ENCODE measurements at regions of chr12 and their contacts with region 1.

Region 1: GRCh38 chr12:4276524-4277204 is 3.1 kb downstream of the CCND2 start:
- DNase-seq: peak; percentile 67 to 94 (median 88)
- ATAC-seq: peak; percentile 30
- H3K4me3 ChIP-seq: no peak overlapping the region
- H3K4me3 Mint-ChIP-seq: peak overlapping the region; percentile 97
- H3K27ac ChIP-seq: peak overlapping the region in 1 of 2 experiments; percentile 94
- H3K27ac Mint-ChIP-seq: peak overlapping the region; percentile 98
- H3K4me1 ChIP-seq: peaks cover 67% of the 10 kb centered on the region
- H3K4me1 Mint-ChIP-seq: peaks cover 65% of the 10 kb centered on the region
- H3K27me3 ChIP-seq: no peaks in the 10 kb centered on the region
- H3K27me3 Mint-ChIP-seq: no peaks in the 10 kb centered on the region
- CTCF ChIP-seq: peak; percentile 83

Region 2: DNA sequence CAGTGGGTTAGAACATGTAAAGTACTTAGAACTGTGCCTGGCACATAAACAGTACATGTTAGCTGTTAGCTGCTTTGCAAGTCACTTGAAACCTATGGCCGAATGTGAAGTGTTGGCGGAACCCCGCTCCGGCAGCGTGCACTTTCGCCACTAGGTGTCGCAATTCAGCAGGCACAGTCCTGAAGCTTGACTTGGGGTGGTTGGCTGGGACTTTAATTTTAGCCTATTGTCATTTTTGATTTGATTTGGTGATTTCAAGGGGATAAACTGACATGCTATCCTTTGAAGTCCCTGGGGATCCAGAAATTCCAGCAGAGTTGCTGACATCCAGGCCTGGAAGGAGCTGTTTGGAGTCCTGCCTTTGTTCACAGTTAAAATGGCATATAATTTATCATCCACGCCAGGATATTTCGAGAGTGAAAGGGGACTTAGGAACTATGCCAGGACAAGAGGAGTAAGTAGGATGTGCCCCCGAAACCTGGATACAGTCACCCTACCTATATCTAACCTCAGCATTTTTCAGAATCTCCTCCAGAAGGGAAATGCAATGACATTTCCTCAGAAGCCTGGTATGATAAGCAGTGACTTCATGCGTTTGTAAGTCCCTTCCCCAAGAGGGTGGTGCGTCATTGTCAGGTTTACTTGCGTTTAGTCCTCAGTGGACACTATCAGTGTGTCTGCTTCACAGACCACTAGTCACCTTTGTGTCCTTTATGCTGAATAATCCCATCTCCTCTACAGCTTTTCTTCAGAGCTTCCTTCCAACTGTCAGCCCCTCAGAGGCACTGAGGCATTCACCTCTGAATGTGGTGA is 1203.0 kb before region 1 on chr12:
- CTCF ChIA-PET with region 1: no interaction called
- POLR2A ChIA-PET with region 1: no interaction called
- intact Hi-C with region 1: loop called in 1 of 2 experiments (anchors 10 kb)
- DNase-seq: peak; percentile 68 to 90 (median 83)
- ATAC-seq: peak; percentile 41
- H3K4me3 ChIP-seq: no peak overlapping the region
- H3K4me3 Mint-ChIP-seq: no peak overlapping the region
- H3K27ac ChIP-seq: no peak overlapping the region
- H3K27ac Mint-ChIP-seq: no peak overlapping the region
- H3K4me1 ChIP-seq: peaks cover 10% of the 10 kb centered on the region
- H3K4me1 Mint-ChIP-seq: peaks cover 13% of the 10 kb centered on the region
- H3K27me3 ChIP-seq: peaks cover 0 to 8% of the 10 kb centered on the region in 2 experiments
- H3K27me3 Mint-ChIP-seq: peaks cover 11% of the 10 kb centered on the region
- CTCF ChIP-seq: peak; percentile 91

Region 3: GRCh38 chr12:3947781-3948180 is 328.9 kb before region 1 on chr12:
- CTCF ChIA-PET with region 1: interaction called, 14 read pairs
- POLR2A ChIA-PET with region 1: interaction called, 4 read pairs
- intact Hi-C with region 1: no loop called
- DNase-seq: peak in 2 of 9 experiments; percentile 55 to 75
- ATAC-seq: peak; percentile 75
- H3K4me3 ChIP-seq: no peak overlapping the region
- H3K4me3 Mint-ChIP-seq: peak overlapping the region; percentile 36
- H3K27ac ChIP-seq: peak overlapping the region; percentile 38 to 61
- H3K27ac Mint-ChIP-seq: peak overlapping the region; percentile 98
- H3K4me1 ChIP-seq: peaks cover 53% of the 10 kb centered on the region
- H3K4me1 Mint-ChIP-seq: peaks cover 62% of the 10 kb centered on the region
- H3K27me3 ChIP-seq: no peaks in the 10 kb centered on the region
- H3K27me3 Mint-ChIP-seq: no peaks in the 10 kb centered on the region
- CTCF ChIP-seq: no peak

Region 4: DNA sequence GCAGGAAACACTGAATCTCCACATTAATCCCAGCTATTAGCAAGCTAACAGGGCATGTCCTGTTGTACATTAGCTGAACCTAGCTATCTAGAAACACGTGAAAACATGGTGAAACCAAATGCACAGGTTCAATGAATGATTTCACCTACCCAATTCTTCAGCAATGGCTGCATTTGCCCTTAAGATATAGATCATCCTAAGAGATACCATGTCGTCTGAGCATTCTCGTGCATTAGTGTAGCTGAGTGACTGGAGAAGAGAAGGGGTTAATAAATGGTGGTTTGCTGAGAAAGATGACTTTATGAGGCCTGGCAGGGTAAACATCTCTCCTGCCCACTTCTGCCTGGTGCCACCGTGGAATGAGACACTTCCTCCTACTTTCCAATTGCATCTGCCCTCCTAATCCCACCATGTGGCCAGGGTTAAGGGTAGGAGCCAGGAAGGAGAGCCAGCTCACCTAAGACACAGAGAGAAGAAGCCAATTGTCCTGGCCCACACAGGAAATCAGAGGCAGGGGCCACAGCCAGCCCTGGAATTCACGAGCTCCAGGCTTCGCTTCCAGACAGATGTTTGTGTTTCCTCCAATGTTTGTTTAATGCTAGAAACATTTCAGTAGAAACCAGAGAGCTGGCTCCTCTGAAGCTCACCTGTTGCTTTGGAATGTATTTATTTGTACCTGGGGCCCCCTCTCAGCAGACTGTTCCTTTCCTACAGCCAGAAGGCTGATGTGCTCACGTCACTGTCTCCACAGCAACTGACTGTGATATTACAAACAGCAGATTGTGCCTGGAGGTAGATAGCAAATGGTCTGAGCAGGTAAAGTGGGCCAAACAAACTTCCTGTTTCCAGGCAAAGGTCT is 277.5 kb before region 1 on chr12:
- CTCF ChIA-PET with region 1: interaction called, 168 read pairs
- POLR2A ChIA-PET with region 1: interaction called, 5 read pairs
- intact Hi-C with region 1: loop called (anchors 1 kb)
- DNase-seq: peak in 3 of 9 experiments; percentile 32 to 56 (median 33)
- ATAC-seq: peak; percentile 69
- H3K4me3 ChIP-seq: no peak overlapping the region
- H3K4me3 Mint-ChIP-seq: no peak overlapping the region
- H3K27ac ChIP-seq: no peak overlapping the region
- H3K27ac Mint-ChIP-seq: no peak overlapping the region
- H3K4me1 ChIP-seq: peaks cover 15% of the 10 kb centered on the region
- H3K4me1 Mint-ChIP-seq: peaks cover 24% of the 10 kb centered on the region
- H3K27me3 ChIP-seq: no peaks in the 10 kb centered on the region
- H3K27me3 Mint-ChIP-seq: no peaks in the 10 kb centered on the region
- CTCF ChIP-seq: no peak

Region 5: DNA sequence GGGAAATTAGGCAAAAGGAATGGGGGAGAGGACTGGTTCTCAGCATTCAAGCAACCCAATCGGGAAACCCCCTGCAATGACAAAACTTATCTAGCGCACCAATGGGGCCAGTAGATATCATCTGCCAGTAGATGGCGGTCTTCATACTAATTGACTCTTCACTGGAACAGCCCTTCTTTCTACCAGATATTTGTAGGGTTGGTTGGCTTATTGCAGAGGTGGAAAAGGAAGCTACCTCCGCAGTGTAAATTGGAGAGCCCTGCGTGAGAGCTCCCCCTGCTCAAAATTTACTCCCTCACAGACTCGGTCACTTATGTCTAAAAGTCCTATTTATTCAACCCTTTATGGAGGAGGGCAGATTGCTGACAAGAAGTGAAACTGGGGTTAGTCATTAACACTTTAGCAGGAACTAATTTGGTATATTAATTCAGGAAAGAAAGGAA is 169.2 kb before region 1 on chr12:
- CTCF ChIA-PET with region 1: interaction called, 90 read pairs
- POLR2A ChIA-PET with region 1: interaction called, 8 read pairs
- intact Hi-C with region 1: loop called (anchors 1 kb)
- DNase-seq: peak; percentile 42 to 93 (median 67)
- ATAC-seq: peak; percentile 98
- H3K4me3 ChIP-seq: no peak overlapping the region
- H3K4me3 Mint-ChIP-seq: peak overlapping the region; percentile 53
- H3K27ac ChIP-seq: peak overlapping the region in 1 of 2 experiments; percentile 72
- H3K27ac Mint-ChIP-seq: peak overlapping the region; percentile 94
- H3K4me1 ChIP-seq: peaks cover 12% of the 10 kb centered on the region
- H3K4me1 Mint-ChIP-seq: peaks cover 17% of the 10 kb centered on the region
- H3K27me3 ChIP-seq: no peaks in the 10 kb centered on the region
- H3K27me3 Mint-ChIP-seq: peaks cover 4% of the 10 kb centered on the region
- CTCF ChIP-seq: peak; percentile 80

Region 6: DNA sequence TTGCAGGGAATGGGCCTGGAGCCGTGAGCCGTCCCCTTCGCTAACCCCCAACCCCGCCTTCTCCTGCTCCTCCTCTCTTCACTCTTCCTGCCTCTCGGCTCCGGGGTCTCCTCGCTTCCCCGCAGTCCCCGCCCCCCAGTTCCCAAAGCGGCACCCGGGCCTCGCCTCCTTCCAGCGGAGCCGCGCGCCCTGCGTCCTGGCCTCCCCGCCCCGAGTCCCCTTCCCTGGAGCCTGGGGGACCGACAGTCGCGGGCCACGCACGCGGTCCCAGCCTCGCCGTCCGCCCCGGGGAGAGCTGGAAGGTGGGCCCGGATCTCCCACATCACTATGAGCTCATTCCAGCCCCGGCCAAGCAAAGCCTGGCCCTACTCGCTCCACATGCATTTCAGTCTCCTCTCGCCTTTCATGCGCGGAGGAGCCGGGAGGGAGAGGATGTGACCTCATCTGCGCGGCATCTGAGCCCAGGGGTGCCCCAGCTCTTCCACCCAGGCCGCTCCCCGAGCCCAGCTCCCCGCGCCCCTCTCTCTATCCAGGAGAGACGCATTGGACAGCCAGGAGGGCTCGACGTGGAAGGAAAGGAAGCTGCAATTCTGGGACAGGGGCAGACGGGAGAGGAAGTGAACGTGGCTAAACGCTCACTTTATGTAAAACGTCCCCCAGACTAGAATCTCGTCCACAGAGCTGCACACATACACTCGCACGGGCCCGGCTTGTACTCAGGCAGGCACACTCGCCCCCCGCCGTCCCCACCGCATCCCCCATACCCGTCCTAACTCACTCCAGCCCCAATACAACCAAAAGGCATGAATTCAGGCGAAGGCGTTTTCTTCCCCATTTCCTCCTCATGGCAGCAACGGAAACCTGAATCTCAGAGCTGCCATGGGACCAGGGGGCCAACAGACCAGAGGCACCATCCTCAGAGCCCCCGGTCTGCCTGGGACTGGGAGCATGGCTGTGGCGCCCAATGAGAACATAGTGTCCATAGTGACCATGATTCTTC is 111.8 kb before region 1 on chr12:
- CTCF ChIA-PET with region 1: interaction called, 6 read pairs
- POLR2A ChIA-PET with region 1: interaction called, 5 read pairs
- intact Hi-C with region 1: loop called in 1 of 2 experiments (anchors 5 kb)
- DNase-seq: peak; percentile 34 to 75 (median 56)
- ATAC-seq: peak; percentile 93
- H3K4me3 ChIP-seq: peak overlapping the region; percentile 63 to 76
- H3K4me3 Mint-ChIP-seq: peak overlapping the region; percentile 91
- H3K27ac ChIP-seq: peak overlapping the region; percentile 59 to 70
- H3K27ac Mint-ChIP-seq: peak overlapping the region; percentile 92
- H3K4me1 ChIP-seq: peaks cover 9% of the 10 kb centered on the region
- H3K4me1 Mint-ChIP-seq: peaks cover 14% of the 10 kb centered on the region
- H3K27me3 ChIP-seq: no peaks in the 10 kb centered on the region
- H3K27me3 Mint-ChIP-seq: no peaks in the 10 kb centered on the region
- CTCF ChIP-seq: no peak

Region 7: GRCh38 chr12:4287325-4288211 is 10.9 kb after region 1 on chr12:
- CTCF ChIA-PET with region 1: interaction called, 18 read pairs
- POLR2A ChIA-PET with region 1: interaction called, 4 read pairs
- intact Hi-C with region 1: no loop called
- DNase-seq: no peak
- ATAC-seq: peak; percentile 37
- H3K4me3 ChIP-seq: no peak overlapping the region
- H3K4me3 Mint-ChIP-seq: no peak overlapping the region
- H3K27ac ChIP-seq: no peak overlapping the region
- H3K27ac Mint-ChIP-seq: peak overlapping the region; percentile 86
- H3K4me1 ChIP-seq: peaks cover 51% of the 10 kb centered on the region
- H3K4me1 Mint-ChIP-seq: peaks cover 85% of the 10 kb centered on the region
- H3K27me3 ChIP-seq: no peaks in the 10 kb centered on the region
- H3K27me3 Mint-ChIP-seq: no peaks in the 10 kb centered on the region
- CTCF ChIP-seq: no peak

Region 8: DNA sequence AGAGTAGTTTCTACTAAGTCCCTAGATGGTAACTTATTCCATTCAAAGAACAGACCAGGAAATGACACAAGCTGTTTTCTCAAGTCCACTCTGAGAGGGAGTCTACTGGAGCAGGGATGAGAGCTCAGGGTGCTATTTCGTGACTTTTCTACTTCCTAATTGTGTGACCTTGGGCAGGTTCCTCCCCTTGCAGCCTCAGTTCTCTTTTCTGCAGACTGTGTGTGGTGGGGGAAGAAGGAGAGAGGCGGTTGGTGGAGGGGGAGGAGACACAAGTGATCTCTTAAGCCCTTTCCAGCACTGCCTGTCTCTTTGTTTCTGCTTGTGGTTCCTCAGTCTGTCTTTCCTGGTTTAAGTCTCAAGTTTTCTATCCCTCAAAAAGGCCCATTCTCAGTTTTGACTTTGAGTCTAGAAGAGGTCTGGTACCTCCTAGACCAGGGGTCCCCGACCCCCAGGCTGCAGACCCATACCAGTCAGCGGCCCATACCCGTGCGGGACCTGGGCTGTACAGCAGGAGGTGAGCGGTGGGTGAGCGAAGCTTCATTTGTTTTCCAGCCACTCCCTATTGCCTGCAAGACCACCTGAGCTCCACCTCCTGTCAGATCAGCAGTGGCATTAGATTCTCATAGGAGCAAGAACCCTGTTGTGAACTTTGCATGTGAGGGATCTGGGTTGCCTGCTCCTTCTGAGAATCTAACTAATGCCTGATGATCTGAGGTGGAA is 158.2 kb after region 1 on chr12:
- CTCF ChIA-PET with region 1: no interaction called
- POLR2A ChIA-PET with region 1: no interaction called
- intact Hi-C with region 1: no loop called
- DNase-seq: peak in 1 of 9 experiments; percentile 21
- ATAC-seq: no peak
- H3K4me3 ChIP-seq: no peak overlapping the region
- H3K4me3 Mint-ChIP-seq: no peak overlapping the region
- H3K27ac ChIP-seq: no peak overlapping the region
- H3K27ac Mint-ChIP-seq: no peak overlapping the region
- H3K4me1 ChIP-seq: no peaks in the 10 kb centered on the region
- H3K4me1 Mint-ChIP-seq: peaks cover 5% of the 10 kb centered on the region
- H3K27me3 ChIP-seq: no peaks in the 10 kb centered on the region
- H3K27me3 Mint-ChIP-seq: no peaks in the 10 kb centered on the region
- CTCF ChIP-seq: no peak

Measured in CD8-positive, alpha-beta T cell (primary cell).